Activated T-helper 2 cell treated with anti-CD3 and anti-CD28 coated beads, Interferon-gamma antibody, Interleukin-2, Interleukin-4, amounts not matched to agents 10 μg/mL and 5 μg/mL and 100 μg/mL, durations not matched to agents 14 hours and 24 hours and 36 hours (primary cell): ENCODE measurements at regions of chr14 and their contacts with region 1.

Region 1: GRCh38 chr14:71753126-71753830 is 179.0 kb upstream of the RGS6 start:
- DNase-seq: peak; percentile 55
- H3K4me3 Mint-ChIP-seq: peak overlapping the region; percentile 26
- H3K27ac Mint-ChIP-seq: no peak overlapping the region
- H3K4me1 Mint-ChIP-seq: peaks cover 18% of the 10 kb centered on the region
- H3K27me3 Mint-ChIP-seq: peaks cover 2% of the 10 kb centered on the region

Region 2: DNA sequence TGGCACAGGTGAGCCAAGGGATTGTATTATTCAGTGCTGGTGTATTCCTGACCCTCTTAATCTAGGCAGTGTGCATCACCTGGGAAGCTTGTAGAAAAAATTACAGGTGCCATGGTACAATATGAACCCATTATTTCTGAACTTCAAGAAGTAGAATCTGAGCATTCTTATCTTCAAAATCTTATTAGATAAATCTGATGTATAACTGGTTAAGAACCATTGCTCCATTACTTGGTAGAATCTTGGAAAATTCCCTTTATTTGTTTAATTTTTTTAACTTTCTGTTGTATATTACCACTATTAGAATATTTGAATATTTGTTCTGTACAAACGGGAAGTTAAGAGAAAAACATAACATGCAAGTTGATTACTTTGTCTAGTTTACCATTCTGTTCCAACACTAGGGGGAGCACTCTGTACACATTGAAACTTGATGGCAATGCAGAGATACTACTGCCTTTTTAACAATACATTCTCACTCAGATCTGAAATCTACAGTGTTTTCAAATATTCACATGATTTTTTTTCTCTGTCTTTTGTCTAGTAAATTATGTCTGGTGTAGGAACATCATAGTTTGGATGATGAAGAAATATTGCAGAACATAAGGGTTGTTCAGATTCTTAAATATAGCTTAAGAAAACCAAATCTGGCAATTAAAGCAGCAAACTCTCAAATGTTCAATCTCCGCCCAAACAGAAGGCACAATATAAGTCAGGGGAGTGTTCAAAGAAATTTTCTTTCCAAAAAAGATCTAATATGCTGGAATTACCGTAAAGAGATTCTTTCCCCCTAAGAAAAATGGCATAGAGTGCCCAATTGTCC is 649.4 kb before region 1 on chr14:
- intact Hi-C with region 1: loop called (anchors 1 kb)
- DNase-seq: no peak
- H3K4me3 Mint-ChIP-seq: no peak overlapping the region
- H3K27ac Mint-ChIP-seq: no peak overlapping the region
- H3K4me1 Mint-ChIP-seq: peaks cover 7% of the 10 kb centered on the region
- H3K27me3 Mint-ChIP-seq: no peaks in the 10 kb centered on the region

Region 3: GRCh38 chr14:71117839-71118743 is 635.2 kb before region 1 on chr14:
- intact Hi-C with region 1: loop called (anchors 5 kb)
- DNase-seq: no peak
- H3K4me3 Mint-ChIP-seq: no peak overlapping the region
- H3K27ac Mint-ChIP-seq: peak overlapping the region; percentile 9
- H3K4me1 Mint-ChIP-seq: peaks cover 16% of the 10 kb centered on the region
- H3K27me3 Mint-ChIP-seq: no peaks in the 10 kb centered on the region

Region 4: GRCh38 chr14:71776471-71777360 is 23.4 kb after region 1 on chr14:
- intact Hi-C with region 1: no loop called
- DNase-seq: no peak
- H3K4me3 Mint-ChIP-seq: no peak overlapping the region
- H3K27ac Mint-ChIP-seq: peak overlapping the region; percentile 28
- H3K4me1 Mint-ChIP-seq: peaks cover 17% of the 10 kb centered on the region
- H3K27me3 Mint-ChIP-seq: peaks cover 19% of the 10 kb centered on the region

Region 5: GRCh38 chr14:71855399-71856036 is 102.2 kb after region 1 on chr14:
- intact Hi-C with region 1: loop called (anchors 10 kb)
- DNase-seq: peak; percentile 26
- H3K4me3 Mint-ChIP-seq: no peak overlapping the region
- H3K27ac Mint-ChIP-seq: no peak overlapping the region
- H3K4me1 Mint-ChIP-seq: peaks cover 11% of the 10 kb centered on the region
- H3K27me3 Mint-ChIP-seq: peaks cover 32% of the 10 kb centered on the region